MCF 10A (cell line): ENCODE measurements at regions of chr3 and their contacts with region 1.

Region 1: GRCh38 chr3:153970741-153971347 is 150.3 kb upstream of the ARHGEF26 start:
- DNase-seq: peak; percentile 30
- H3K4me3 Mint-ChIP-seq: no peak overlapping the region
- H3K27ac Mint-ChIP-seq: no peak overlapping the region
- H3K4me1 Mint-ChIP-seq: no peaks in the 10 kb centered on the region
- H3K27me3 Mint-ChIP-seq: no peaks in the 10 kb centered on the region
- CTCF ChIP-seq: peak; percentile 33

Region 2: DNA sequence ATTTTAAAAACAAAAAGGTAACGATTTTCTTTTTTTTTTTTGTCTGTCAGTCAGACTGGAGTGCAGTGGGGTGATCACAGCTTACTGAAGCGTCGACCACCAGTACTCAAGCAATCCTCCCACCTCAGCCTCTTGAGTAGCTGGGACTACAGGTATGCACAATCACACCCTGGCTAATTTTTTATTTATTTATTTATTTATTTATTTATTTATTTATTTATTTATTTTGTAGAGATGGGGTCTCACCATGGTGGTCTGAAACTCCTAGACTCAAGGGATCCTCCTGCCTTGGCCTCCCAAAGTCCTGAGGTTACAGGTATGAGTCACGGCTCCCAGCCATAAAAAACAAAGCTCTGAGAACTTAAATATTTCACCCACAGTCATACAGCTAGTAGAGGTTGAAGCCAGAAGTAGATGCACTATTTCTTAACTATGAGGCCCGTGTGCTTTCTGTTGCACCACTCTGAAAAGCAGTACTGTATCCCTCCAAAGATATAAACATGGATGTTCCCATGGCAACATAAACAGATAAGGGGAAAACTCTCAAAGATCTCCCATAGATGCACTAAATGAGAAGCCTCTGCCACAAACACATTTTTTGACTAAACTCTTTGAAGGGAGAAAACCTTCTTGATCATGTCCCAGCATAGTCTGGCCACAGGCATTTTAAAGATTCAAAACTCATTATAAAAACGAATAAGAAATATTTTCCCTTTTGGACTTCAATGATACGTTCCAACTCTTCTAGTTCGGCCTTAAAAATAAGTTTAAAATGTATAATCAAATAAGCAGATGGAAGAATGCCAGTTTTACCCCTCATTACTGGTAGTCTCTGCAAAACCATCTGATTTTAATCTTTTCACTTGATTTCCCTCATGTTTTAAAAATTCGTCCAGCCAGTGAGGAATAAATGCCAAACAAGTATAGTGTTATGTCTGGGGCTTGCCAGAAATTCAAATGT is 11.9 kb before region 1 on chr3:
- CTCF ChIA-PET with region 1: interaction called, 14 read pairs
- POLR2A ChIA-PET with region 1: interaction called, 3 read pairs
- intact Hi-C with region 1: no loop called
- DNase-seq: no peak
- H3K4me3 Mint-ChIP-seq: no peak overlapping the region
- H3K27ac Mint-ChIP-seq: no peak overlapping the region
- H3K4me1 Mint-ChIP-seq: no peaks in the 10 kb centered on the region
- H3K27me3 Mint-ChIP-seq: no peaks in the 10 kb centered on the region
- CTCF ChIP-seq: no peak

Region 3: DNA sequence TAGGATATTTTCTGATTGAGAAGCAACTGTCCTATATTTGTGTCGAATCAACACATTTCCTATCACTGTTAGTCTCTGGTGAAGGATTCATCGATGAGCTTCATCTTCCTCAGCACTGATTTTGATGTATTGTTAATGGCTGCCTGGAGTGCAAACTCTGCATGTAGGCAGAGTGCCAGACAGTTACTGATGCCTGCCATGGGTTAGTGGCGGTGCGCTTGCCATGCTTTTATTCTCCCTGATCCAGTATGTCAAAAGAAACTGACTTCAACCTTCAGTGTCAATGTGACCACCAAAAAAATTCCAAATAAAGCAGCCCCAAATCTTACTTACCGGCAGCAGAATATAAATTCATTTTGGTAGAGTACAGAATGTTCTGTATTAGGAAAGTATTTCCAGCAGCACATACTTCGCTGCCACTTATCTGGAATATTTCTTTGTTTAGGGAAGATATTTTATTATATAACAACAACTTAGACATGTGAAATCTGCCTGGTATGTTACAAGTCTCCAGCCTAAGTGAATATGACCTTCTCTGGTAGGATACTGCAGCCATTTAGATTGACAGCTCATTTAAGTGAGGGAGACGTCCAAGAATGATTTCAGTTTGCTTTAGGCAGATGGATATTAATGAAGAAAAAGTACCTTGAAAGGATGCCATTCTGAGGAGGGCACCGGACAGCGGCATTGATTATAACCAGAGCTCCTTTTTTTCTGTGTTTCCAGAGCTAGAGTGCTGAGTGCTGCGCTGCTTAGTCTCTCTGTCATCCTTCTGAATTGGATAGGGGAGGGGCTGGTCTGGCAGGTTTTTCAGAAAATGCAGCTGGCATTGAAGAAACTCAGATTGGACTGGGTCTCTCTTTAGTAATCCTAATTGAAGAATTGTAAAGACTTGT is 210.2 kb after region 1 on chr3:
- CTCF ChIA-PET with region 1: no interaction called
- POLR2A ChIA-PET with region 1: no interaction called
- intact Hi-C with region 1: no loop called
- DNase-seq: no peak
- H3K4me3 Mint-ChIP-seq: no peak overlapping the region
- H3K27ac Mint-ChIP-seq: no peak overlapping the region
- H3K4me1 Mint-ChIP-seq: no peaks in the 10 kb centered on the region
- H3K27me3 Mint-ChIP-seq: no peaks in the 10 kb centered on the region
- CTCF ChIP-seq: no peak